ENCODE measurements at regions of chr12 and their contacts with region 1.

Region 1: GRCh38 chr12:1939801-1940607 is 21.6 kb upstream of the CACNA2D4 start:
- DNase-seq: peak; percentile 95
- H3K4me3 ChIP-seq: peak overlapping the region; percentile 2
- H3K27ac ChIP-seq: peak overlapping the region; percentile 74
- H3K4me1 ChIP-seq: peaks cover 4% of the 10 kb centered on the region
- H3K27me3 ChIP-seq: no peaks in the 10 kb centered on the region
- CTCF ChIP-seq: peak; percentile 98

Region 2: GRCh38 chr12:1655225-1655788 is 284.7 kb before region 1 on chr12:
- intact Hi-C with region 1: loop called (anchors 5 kb)
- DNase-seq: peak; percentile 52
- H3K4me3 ChIP-seq: no peak overlapping the region
- H3K27ac ChIP-seq: no peak overlapping the region
- H3K4me1 ChIP-seq: no peaks in the 10 kb centered on the region
- H3K27me3 ChIP-seq: no peaks in the 10 kb centered on the region
- CTCF ChIP-seq: no peak

Region 3: DNA sequence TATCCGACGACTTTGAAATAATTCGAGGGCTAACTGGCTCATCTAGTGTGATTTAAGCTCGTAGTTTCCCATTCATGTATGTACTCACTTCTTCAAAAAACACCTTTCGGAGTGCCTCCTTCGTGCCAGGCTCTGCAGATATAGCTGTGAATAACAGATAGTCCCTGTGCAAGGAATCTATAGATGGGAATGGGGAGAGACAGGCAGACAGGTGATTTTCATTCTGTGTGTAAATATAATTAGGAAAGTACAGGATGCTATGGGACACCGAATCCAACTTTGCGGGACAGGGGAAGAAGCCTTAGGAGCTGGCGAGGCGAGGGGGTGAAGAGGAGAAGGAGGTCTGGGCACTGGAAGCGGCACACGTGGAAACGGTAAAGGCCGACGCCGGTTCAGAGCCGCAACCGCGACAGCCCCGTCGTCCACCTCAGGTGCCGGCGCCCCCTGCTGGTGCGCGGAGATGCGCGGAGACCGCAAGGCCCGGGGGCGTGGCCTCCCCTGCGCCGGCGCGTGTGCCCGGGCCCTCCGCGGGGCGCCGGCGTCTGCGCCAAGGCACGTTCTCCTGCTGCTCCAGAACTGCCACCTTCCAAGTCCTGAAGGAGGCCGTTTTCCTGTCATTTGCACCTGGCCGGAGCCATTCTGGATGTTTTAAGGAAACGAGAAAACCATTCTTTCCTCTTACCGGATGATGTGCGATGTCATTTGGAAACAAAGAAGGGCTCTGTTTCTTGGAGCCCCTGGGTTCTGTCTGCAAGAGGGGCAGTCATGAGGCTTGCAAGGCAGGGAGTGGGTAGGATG is 94.8 kb after region 1 on chr12:
- intact Hi-C with region 1: loop called (anchors 10 kb)
- DNase-seq: peak; percentile 91
- H3K4me3 ChIP-seq: peak overlapping the region; percentile 19
- H3K27ac ChIP-seq: no peak overlapping the region
- H3K4me1 ChIP-seq: no peaks in the 10 kb centered on the region
- H3K27me3 ChIP-seq: no peaks in the 10 kb centered on the region
- CTCF ChIP-seq: peak; percentile 94

Region 4: DNA sequence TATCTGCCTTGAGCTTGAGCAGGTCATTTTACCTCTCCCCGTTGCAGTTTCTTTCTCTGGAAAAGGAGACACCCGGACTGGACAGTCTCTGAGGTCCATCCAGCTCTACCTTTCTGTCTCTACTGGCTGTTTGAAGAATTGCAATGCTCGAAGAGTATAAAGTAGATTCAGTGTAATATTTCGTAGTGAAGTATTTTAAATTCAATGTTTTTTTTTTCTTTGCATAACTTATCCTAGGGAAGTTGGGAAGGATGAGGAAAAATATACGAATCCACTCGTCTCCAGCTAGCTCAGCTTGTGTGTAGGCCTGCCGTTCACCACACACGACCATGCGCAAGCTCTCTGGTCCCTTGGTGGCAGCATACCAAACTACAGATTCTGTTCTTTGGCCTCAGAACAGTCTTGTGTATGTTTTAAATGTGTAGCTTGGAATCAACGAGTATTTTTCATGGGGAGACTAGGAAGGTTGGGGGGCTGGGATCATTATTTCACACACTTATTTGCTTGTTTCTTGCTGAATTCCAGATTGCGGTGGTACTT is 420.7 kb after region 1 on chr12:
- intact Hi-C with region 1: no loop called
- DNase-seq: no peak
- H3K4me3 ChIP-seq: no peak overlapping the region
- H3K27ac ChIP-seq: no peak overlapping the region
- H3K4me1 ChIP-seq: no peaks in the 10 kb centered on the region
- H3K27me3 ChIP-seq: no peaks in the 10 kb centered on the region
- CTCF ChIP-seq: no peak